Ascending aorta (tissue), 2 donors: ENCODE measurements at regions of chr17 and their contacts with region 1.

Region 1: DNA sequence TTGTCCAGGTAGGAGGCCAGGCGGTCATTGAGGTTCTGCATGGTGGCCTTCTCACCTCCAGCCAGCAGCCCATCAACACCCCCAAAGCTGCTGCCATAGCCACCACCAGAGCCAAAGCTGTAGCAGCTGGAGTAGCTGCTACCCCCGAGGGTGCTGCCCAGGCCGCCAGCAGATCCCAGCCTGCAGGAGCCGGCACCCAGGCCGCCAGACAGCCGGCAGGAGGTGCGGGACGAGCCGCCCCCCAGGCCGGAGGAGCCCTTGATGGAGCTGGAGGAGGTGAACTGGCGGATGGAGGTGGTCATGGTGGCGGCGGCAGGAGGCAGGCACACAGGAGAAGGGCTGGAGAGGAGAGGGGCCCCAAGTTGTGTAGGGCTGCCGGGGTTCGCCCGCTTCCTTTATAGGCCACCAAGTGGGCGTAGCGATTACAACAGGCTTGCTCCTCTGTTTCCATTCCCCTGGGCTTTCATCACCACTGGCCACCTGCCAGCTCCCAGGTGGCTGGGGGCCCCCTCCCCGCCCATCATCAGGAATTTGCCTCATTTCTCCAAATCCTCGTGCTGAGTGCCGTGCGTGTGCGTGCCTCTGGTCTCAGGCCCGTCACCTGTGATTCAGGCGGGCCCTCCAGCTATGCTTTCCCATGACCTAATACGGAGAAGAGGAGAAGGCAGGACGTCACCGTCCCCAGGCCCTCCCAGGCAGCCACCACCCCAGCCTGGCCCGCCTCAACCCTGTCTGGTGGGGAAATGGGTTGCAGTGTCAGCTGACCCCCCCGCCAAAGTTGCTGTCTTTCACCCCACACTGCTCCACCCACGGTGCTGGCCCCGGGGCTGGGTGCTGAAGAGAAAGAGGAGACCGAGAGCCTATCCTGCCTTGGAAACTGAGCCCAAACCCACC is at the start of gene KRT17:
- DNase-seq: no peak
- H3K4me3 ChIP-seq: no peak within 1 kb of the TSS
- H3K27ac ChIP-seq: peak within 1 kb of the TSS in 1 of 2 donors; percentile 41
- H3K4me1 ChIP-seq: no peaks in the 10 kb centered on the region
- H3K27me3 ChIP-seq: no peaks in the 10 kb centered on the region
- CTCF ChIP-seq: no peak
- total RNA-seq, gene KRT17: 14.8 TPM

Region 2: DNA sequence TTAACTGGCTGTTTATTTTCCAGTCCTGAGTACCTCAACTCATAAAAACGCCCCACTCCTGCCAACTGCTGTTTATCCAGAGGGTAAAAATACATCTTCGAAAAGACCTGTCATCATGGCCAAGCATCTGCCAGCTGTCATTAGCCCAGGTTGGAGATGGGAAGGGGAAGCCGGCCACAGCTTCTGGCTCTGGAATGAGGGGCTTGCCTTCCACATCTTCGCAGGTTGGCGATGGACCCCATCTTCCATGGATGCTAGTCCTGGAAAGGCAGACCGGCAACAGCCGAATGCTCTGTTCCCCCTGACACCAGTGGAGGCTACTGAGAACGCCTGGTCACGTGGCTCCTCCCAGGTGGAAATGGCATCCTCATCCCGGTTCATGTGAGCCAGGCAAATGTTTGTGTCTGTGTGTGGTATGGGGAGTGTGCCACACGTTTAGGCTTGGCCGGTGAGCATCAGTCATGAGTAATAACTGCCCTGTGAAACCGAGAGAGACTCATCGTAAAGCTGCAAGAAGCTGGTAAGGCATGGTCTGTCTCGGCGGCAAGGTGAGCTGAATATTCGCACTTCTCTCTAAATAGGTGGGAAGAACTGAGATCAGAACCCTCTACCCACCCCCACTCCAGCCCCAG is 308.5 kb before region 1 on chr17:
- intact Hi-C with region 1: loop called (anchors 10 kb)
- DNase-seq: no peak
- H3K4me3 ChIP-seq: no peak overlapping the region
- H3K27ac ChIP-seq: no peak overlapping the region
- H3K4me1 ChIP-seq: no peaks in the 10 kb centered on the region
- H3K27me3 ChIP-seq: no peaks in the 10 kb centered on the region
- CTCF ChIP-seq: no peak

Region 3: GRCh38 chr17:41665566-41666236 is 41.2 kb after region 1 on chr17:
- intact Hi-C with region 1: no loop called
- DNase-seq: peak; percentile 38 to 93
- H3K4me3 ChIP-seq: peak overlapping the region; percentile 52 to 72
- H3K27ac ChIP-seq: peak overlapping the region; percentile 82 to 85
- H3K4me1 ChIP-seq: peaks cover 0 to 14% of the 10 kb centered on the region in 2 donors
- H3K27me3 ChIP-seq: no peaks in the 10 kb centered on the region
- CTCF ChIP-seq: peak; percentile 94 to 96 (median 95)